Esophagus squamous epithelium (tissue), 5 donors: ENCODE measurements at regions of chr6 and their contacts with region 1.

Region 1: GRCh38 chr6:108113557-108114519 is 39.3 kb upstream of the OSTM1 start:
- DNase-seq: no peak
- H3K4me3 ChIP-seq: peak overlapping the region in 3 of 4 donors; percentile 27 to 61 (median 44)
- H3K27ac ChIP-seq: no peak overlapping the region
- H3K4me1 ChIP-seq: peaks cover 34 to 55% (median 41%) of the 10 kb centered on the region in 3 donors
- H3K27me3 ChIP-seq: peaks cover 12 to 100% (median 15%) of the 10 kb centered on the region in 4 donors
- CTCF ChIP-seq: peak in 5 of 6 experiments; percentile 37 to 57 (median 52)
- POLR2A ChIP-seq: no peak

Region 2: DNA sequence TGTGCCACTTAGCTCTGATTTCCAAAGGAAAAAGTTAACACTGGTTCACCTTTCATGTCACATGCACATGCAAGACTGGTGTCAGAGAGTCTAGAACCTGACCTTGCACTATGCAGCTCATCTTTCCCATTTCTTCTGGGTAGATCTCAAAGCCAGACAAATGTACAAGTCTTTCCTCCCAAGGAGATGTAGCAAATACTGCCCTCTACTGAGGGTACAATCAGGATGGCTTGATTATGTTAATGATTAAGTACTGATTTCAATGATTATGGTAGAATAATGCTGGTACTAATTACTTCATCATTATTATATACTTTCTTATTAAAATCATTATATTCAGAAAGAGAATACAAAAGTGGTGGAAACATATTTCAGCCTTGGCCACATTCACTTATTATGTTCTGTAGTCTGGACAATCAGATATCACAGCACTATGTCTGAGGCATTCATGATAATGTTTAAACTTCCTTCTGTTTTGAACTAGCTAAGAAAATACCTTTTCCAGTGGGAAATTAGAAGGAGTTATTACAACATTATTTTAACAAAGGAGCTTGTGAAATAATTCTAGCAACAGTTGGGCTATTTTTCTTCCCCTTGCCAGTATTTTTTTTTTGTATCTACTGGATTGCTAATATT is 378.4 kb after region 1 on chr6:
- intact Hi-C with region 1: loop called (anchors 2 kb)
- DNase-seq: no peak
- H3K4me3 ChIP-seq: no peak overlapping the region
- H3K27ac ChIP-seq: no peak overlapping the region
- H3K4me1 ChIP-seq: peaks cover 0 to 7% (median 0%) of the 10 kb centered on the region in 3 donors
- H3K27me3 ChIP-seq: no peaks in the 10 kb centered on the region
- CTCF ChIP-seq: peak in 5 of 6 experiments; percentile 38 to 60 (median 54)
- POLR2A ChIP-seq: no peak